CD4-positive, alpha-beta T cell (primary cell): ENCODE measurements at regions of chr17 and their contacts with region 1.

Region 1: GRCh38 chr17:80426681-80427326 is 11.8 kb downstream of the ENDOV start:
- DNase-seq: peak; percentile 74 to 94 (median 84)
- ATAC-seq: peak; percentile 98
- H3K4me3 ChIP-seq: no peak overlapping the region
- H3K4me3 Mint-ChIP-seq: no peak overlapping the region
- H3K27ac ChIP-seq: no peak overlapping the region
- H3K27ac Mint-ChIP-seq: no peak overlapping the region
- H3K4me1 ChIP-seq: peaks cover 20% of the 10 kb centered on the region
- H3K4me1 Mint-ChIP-seq: peaks cover 5% of the 10 kb centered on the region
- H3K27me3 ChIP-seq: no peaks in the 10 kb centered on the region
- H3K27me3 Mint-ChIP-seq: no peaks in the 10 kb centered on the region
- CTCF ChIP-seq: peak; percentile 92

Region 2: DNA sequence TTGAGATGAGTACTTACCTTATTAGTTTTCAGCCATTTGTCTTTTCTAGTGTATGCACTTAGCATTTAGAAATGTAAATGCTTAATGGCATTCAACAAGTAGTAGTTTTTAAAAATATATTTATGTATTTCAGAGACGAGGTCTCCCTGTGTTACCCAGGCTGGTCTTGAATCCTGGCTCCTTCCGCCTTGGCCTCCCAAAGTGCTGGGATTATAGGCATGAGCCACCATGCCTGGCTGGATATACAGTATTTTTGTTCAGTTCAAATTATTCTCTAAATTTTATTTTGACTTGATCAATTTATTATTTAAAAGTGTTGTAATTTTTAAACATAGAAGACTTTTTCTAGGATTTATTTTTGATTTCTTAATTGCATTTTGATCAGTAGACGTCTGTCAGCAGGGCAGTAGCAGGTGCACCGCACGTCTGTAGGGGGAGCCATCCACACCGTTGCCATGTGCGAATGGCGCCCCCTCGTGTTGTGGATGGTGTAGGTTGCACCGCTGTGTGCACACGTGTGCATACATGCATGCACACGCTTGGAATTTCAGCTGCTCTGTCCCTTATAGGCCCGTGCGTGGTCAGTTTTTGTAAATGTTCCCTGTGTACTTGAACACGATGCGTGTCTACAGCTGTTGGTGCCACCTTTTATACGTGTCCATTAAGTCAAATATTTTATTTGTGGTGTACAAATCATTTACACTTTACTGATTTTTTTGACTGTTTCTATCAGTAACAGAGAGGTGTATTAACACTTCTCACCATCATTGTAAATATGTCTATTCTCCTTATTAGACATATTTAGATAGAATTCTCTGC is 148.5 kb after region 1 on chr17:
- CTCF ChIA-PET with region 1: interaction called, 7 read pairs
- POLR2A ChIA-PET with region 1: interaction called, 3 read pairs
- intact Hi-C with region 1: loop called in 1 of 2 experiments (anchors 1 kb)
- DNase-seq: peak; percentile 85 to 97 (median 90)
- ATAC-seq: peak; percentile 100
- H3K4me3 ChIP-seq: no peak overlapping the region
- H3K4me3 Mint-ChIP-seq: no peak overlapping the region
- H3K27ac ChIP-seq: no peak overlapping the region
- H3K27ac Mint-ChIP-seq: no peak overlapping the region
- H3K4me1 ChIP-seq: no peaks in the 10 kb centered on the region
- H3K4me1 Mint-ChIP-seq: peaks cover 25% of the 10 kb centered on the region
- H3K27me3 ChIP-seq: no peaks in the 10 kb centered on the region
- H3K27me3 Mint-ChIP-seq: no peaks in the 10 kb centered on the region
- CTCF ChIP-seq: peak; percentile 100

Region 3: DNA sequence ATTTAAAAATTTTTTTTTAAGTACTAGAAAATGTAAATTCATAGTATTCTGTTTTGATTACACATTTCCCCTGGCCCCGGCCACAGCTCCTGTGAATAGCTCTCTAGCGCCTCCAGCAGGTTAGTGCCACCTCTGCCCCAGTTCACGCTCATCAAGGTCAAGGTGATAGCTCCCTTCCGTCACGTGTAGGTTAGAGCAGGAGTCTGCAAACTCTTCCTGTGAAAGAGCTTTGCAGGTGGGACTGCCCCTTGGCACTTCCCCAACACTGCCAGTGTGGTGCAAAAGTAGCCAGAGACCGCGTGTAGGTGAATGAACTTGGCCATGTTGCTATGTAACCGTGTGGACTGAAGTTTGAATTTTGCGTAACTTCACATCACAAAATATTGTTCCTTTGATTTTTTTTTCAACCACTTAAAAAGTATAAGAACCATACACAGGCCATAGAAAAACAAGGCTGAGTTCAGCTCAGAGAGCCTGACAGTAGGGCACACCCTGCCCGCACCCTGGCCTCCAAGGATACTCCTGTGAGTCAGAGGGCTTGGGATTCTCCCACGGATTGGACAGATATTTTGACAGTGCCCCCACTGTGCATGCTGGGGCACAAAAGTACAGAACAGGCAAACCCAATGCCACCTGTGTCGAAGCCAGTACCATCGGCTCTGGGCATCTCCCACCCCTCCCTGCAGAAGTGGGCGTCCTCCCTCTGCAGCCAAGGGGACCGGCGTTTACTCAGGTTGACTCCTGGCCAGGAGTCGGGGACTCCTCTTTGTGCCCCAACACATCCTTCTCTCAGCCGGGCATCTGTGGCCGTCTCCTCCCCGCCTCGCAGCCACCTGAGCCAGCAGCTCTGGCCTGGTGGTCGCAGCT is 472.8 kb after region 1 on chr17:
- CTCF ChIA-PET with region 1: interaction called, 10 read pairs
- POLR2A ChIA-PET with region 1: interaction called, 3 read pairs
- intact Hi-C with region 1: loop called in 1 of 2 experiments (anchors 1 kb)
- DNase-seq: peak; percentile 70 to 89 (median 78)
- ATAC-seq: peak; percentile 95
- H3K4me3 ChIP-seq: no peak overlapping the region
- H3K4me3 Mint-ChIP-seq: no peak overlapping the region
- H3K27ac ChIP-seq: no peak overlapping the region
- H3K27ac Mint-ChIP-seq: peak overlapping the region; percentile 47
- H3K4me1 ChIP-seq: peaks cover 22% of the 10 kb centered on the region
- H3K4me1 Mint-ChIP-seq: peaks cover 30% of the 10 kb centered on the region
- H3K27me3 ChIP-seq: no peaks in the 10 kb centered on the region
- H3K27me3 Mint-ChIP-seq: no peaks in the 10 kb centered on the region
- CTCF ChIP-seq: peak; percentile 87

Region 4: GRCh38 chr17:80970044-80970761 is 543.4 kb after region 1 on chr17:
- CTCF ChIA-PET with region 1: interaction called, 5 read pairs
- POLR2A ChIA-PET with region 1: interaction called, 11 read pairs
- intact Hi-C with region 1: loop called (anchors 1 kb)
- DNase-seq: peak in 13 of 14 experiments; percentile 28 to 66 (median 44)
- ATAC-seq: peak; percentile 82
- H3K4me3 ChIP-seq: no peak overlapping the region
- H3K4me3 Mint-ChIP-seq: no peak overlapping the region
- H3K27ac ChIP-seq: no peak overlapping the region
- H3K27ac Mint-ChIP-seq: no peak overlapping the region
- H3K4me1 ChIP-seq: peaks cover 23% of the 10 kb centered on the region
- H3K4me1 Mint-ChIP-seq: peaks cover 6% of the 10 kb centered on the region
- H3K27me3 ChIP-seq: no peaks in the 10 kb centered on the region
- H3K27me3 Mint-ChIP-seq: no peaks in the 10 kb centered on the region
- CTCF ChIP-seq: peak; percentile 47

Region 5: GRCh38 chr17:80981062-80981902 is 554.5 kb after region 1 on chr17:
- CTCF ChIA-PET with region 1: interaction called, 15 read pairs
- POLR2A ChIA-PET with region 1: no interaction called
- intact Hi-C with region 1: loop called (anchors 1 kb)
- DNase-seq: peak in 10 of 14 experiments; percentile 14 to 75 (median 38)
- ATAC-seq: peak; percentile 78
- H3K4me3 ChIP-seq: no peak overlapping the region
- H3K4me3 Mint-ChIP-seq: no peak overlapping the region
- H3K27ac ChIP-seq: no peak overlapping the region
- H3K27ac Mint-ChIP-seq: no peak overlapping the region
- H3K4me1 ChIP-seq: peaks cover 8% of the 10 kb centered on the region
- H3K4me1 Mint-ChIP-seq: peaks cover 8% of the 10 kb centered on the region
- H3K27me3 ChIP-seq: peaks cover 0 to 15% of the 10 kb centered on the region in 2 experiments
- H3K27me3 Mint-ChIP-seq: peaks cover 30% of the 10 kb centered on the region
- CTCF ChIP-seq: peak; percentile 72